AG04450 (cell line): ENCODE measurements at regions of chr16 and their contacts with region 1.

Region 1: DNA sequence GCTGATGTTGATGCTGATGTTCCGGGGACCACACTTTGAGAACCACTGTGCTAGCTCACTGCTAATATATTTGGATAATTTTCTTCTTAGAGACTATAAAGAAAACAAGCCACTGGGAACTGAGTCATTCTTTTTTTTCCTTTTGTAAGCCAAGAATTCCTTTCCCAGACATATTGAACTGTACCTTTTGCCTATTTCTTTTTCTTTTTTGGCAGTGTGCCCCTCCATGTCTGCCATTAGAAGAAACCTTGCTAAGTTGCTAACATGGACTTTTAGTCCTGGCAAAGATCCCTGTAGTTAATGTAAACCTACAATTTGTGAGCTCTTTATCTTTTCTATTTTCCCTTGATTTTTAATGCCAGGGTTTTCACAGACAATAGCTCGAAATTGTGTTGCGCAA is 17.3 kb upstream of the ERCC4 start:
- DNase-seq: no peak
- H3K4me3 ChIP-seq: no peak overlapping the region
- H3K27ac ChIP-seq: no peak overlapping the region
- H3K27me3 ChIP-seq: peaks cover 2% of the 10 kb centered on the region
- CTCF ChIP-seq: no peak

Region 2: DNA sequence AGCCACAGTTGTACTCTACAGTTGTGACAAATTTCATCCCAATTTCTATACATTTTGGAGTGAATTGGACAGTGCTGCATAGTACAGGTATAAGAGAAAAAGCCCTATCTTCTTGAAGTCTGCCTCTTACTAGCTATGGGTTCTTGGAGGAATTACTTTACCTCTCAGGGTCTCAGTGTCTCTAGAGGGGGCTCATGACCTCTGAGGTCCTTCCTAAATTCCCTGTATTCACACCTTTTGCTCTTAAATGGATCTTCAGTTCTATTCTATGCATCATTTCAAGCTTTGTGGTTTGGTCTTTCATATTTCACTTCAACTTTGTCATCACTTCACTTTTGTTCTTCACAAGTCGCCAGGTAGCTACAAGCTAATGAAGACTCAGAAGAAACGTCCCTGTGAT is 53.9 kb before region 1 on chr16:
- CTCF ChIA-PET with region 1: no interaction called
- POLR2A ChIA-PET with region 1: no interaction called
- DNase-seq: no peak
- H3K4me3 ChIP-seq: no peak overlapping the region
- H3K27ac ChIP-seq: no peak overlapping the region
- H3K27me3 ChIP-seq: no peaks in the 10 kb centered on the region
- CTCF ChIP-seq: no peak

Region 3: DNA sequence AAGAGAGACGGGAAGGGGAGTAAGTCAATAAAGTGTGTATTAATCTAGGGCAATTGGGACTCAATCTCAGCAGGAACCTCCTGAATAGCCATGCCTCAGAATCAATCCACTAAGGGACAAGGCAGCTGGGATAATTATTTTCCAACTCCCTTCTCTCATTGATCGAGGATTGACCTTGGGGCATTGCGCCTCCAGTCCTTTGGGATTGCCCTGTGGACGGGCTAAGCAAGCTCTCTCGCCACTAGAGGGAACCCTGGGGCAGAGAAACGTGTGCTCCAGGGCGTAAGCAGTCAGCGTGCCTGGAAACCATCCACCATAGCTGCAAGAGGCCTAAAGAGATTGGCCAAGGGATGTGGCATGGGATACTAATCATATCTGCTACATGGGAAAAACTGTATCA is 36.6 kb before region 1 on chr16:
- CTCF ChIA-PET with region 1: interaction called, 11 read pairs
- POLR2A ChIA-PET with region 1: no interaction called
- DNase-seq: peak; percentile 43
- H3K4me3 ChIP-seq: no peak overlapping the region
- H3K27ac ChIP-seq: no peak overlapping the region
- H3K27me3 ChIP-seq: no peaks in the 10 kb centered on the region
- CTCF ChIP-seq: peak; percentile 86